Right cardiac atrium (tissue), 5 donors: ENCODE measurements at regions of chr10 and their contacts with region 1.

Region 1: DNA sequence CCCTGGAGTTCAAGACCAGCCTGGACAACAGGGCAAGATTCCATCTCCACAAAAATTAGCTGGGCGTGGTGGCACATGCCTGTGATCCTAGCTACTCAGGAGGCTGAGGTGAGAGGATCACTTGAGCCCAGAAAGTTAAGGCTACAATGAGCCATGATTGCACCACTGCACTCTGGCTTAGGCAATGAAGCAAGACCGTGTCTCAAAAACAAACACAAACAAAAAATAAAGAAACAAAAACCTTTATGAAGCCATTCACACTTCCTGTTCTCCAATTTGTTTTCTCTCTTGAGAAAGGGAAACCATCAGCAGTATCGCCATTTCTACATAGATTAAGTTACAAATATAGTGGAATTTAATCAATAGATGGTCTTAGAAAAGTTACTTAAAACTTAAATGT is 19.8 kb downstream of the YME1L1 start:
- DNase-seq: no peak
- ATAC-seq: no peak
- H3K4me3 ChIP-seq: no peak overlapping the region
- H3K27ac ChIP-seq: no peak overlapping the region
- H3K4me1 ChIP-seq: no peaks in the 10 kb centered on the region
- H3K27me3 ChIP-seq: no peaks in the 10 kb centered on the region

Region 2: DNA sequence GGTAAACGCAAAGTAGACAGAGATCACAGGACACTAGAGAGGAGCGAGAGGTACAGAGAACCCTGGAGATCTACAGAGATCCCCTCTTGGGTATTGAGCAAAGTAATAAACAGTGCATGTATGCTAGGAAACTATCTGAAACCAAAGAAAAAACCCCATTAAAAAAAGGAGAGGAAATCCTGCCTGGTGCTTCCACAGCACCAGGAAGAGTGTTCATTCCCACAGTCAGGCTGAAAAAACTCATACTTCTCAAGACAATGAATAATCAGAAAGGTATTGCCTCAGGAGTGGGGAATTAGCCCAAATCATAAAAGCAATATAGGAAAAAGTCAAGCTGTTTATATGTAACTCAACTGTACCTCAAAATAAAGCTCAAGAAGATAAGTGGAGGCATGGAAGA is 93.2 kb before region 1 on chr10:
- intact Hi-C with region 1: loop called in 1 of 4 experiments (anchors 10 kb)
- DNase-seq: no peak
- ATAC-seq: no peak
- H3K4me3 ChIP-seq: no peak overlapping the region
- H3K27ac ChIP-seq: no peak overlapping the region
- H3K4me1 ChIP-seq: no peaks in the 10 kb centered on the region
- H3K27me3 ChIP-seq: no peaks in the 10 kb centered on the region

Region 3: DNA sequence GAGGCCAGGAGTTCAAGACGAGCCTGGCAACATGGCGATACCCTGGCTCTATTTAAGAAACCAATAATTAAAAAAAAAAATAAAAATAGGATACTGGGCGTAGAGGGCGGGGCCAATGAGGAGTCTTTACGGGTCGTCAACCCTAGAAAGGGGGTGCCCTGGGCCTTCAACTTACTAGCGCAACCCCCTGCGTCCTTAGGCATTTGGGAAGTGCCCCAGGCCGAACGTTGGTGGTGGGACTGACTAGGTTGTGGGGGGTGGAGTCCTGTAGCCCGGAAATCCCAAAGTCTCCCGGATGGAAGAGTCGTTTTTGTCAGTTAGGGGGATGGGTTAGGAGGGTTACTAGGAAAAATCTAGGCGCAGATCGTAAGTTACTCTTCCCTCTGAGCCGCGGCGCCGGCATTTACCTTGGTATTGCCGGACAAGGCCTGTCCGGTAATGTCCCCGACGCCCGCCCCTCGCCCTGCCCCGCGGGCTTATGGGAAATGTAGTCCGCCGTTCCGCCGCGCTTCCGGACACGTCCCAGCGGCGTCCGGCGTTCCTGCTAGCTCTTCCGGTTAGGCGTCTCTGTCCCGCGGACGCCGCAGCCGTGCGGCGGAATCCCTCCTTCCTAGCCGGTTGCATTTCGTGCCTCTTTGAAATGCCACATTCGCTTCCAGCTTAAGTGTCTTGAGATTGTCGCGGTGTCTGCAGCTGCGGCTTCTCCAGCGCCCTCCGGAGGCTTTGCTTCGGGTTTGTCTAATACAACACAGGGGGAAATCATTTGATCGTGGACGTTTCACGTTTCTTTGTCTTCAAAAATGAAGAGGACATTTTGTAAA is 107.5 kb after region 1 on chr10:
- intact Hi-C with region 1: no loop called
- DNase-seq: peak; percentile 92 to 97 (median 96)
- ATAC-seq: peak; percentile 94 to 95
- H3K4me3 ChIP-seq: peak overlapping the region; percentile 69
- H3K27ac ChIP-seq: peak overlapping the region; percentile 99
- H3K4me1 ChIP-seq: peaks cover 6% of the 10 kb centered on the region
- H3K27me3 ChIP-seq: no peaks in the 10 kb centered on the region

Region 4: DNA sequence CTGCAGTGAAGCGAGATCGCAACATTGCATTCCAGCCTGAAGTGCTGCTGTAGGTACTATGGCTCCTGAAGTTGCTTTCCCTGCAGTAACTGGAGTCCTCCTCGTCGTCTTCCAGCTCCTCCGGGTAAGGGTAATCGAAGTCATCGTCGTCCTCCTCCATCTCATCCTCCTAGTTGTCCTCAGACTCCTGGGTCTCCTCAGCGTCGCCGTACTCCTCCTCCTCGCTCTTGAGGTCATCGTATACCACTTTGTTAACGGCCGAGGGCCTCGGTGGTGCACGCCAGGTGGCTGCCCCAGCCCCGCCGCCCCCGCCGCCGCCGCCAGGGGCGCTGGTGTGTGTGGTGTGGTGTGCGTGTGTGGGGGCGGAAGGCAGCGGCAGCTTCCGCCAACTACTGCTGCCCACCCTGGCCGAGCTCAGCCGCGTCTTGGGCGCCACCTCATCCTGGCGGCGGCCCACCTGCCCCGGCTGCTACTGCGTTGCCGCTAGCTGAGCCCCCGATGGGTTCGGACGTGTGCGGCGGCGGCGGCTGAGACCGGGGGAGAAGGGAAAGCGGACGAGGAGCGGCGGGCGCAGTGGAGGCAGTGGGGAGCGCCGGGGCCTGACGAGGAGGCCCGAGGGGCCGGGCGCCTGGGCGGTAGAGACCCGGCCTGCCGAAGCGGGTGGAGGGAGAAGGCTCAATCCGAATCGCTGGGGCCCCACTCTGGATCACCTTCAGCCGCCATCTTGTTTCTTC is 118.1 kb after region 1 on chr10:
- intact Hi-C with region 1: no loop called
- DNase-seq: peak; percentile 73 to 90 (median 89)
- ATAC-seq: peak; percentile 96 to 99
- H3K4me3 ChIP-seq: peak overlapping the region; percentile 58
- H3K27ac ChIP-seq: peak overlapping the region; percentile 40
- H3K4me1 ChIP-seq: no peaks in the 10 kb centered on the region
- H3K27me3 ChIP-seq: no peaks in the 10 kb centered on the region

Region 5: DNA sequence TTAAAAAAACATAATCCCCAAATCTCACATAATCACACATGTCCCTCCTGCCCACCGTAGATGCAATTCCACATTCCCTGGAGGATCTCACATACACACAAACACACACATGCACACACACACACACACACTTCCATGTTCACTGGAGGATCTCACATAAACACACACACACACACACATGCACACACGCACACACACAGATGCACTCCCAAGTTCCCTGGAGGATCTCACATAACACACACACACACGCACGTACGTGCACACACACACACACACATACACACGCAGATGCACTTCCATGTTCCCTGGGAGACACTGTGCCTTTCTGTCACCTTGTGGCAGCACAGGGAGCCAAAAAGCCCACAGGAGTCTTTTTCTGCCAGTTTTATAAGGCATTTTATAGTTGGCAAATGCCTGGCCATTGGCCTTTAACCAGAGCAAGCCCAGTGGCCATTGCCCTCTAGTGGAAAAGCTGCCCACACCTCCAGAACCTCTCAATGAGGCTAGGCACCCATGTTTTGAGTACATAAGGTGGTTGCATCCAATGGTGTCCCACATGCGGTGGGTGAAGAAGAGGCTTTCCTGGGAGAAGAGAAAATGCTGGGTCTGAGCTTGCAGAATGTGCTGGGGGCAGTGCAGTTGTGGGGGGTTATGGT is 221.7 kb after region 1 on chr10:
- intact Hi-C with region 1: no loop called
- DNase-seq: no peak
- ATAC-seq: no peak
- H3K4me3 ChIP-seq: no peak overlapping the region
- H3K27ac ChIP-seq: no peak overlapping the region
- H3K4me1 ChIP-seq: no peaks in the 10 kb centered on the region
- H3K27me3 ChIP-seq: no peaks in the 10 kb centered on the region